ENCODE measurements at regions of chr10 and their contacts with region 1.

Region 1: GRCh38 chr10:100046021-100046486 is 35.6 kb downstream of the CPN1 start:
- DNase-seq: peak; percentile 95
- ATAC-seq: peak; percentile 90

Region 2: DNA sequence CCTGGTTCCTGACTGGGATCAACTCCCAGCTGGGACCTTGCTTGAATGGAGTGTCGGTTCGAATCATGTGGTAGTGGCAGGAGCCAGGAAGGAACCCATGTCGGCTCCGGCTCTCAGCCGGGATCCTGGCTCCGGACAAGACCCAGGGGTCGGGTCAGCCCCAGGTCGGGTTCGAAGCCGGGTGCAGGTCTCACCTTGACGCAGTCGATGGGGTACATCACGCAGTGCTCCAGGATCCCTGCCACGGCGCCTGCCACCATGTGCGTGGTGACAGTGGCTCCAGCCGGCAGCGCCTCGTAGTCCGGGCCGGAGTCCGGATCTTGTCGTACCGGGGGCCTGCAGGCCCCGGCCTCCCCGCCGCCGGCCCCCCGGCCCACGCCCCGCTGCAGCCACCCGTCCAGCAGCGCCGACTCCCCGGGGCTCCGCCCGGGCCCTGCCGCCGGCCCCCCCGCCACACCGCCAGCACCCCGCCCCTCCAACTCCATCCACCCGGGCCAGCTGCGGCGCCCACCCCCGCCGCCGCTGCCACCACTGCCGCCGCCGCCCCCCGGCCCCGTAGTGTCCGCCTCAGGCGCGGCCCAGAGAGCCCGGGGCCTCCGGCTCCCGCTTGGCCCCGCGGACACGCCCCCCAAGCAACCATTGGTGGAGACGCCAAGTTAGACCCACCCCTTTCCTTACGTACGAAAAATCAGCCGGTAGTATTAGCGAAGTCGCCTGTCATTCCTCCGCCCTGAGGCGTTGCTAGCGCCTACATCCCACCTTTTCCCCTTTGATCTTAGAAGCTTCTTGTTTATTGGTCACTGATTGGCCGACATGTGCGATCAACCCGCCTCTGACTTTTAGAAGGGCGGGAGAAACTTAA is 426.0 kb before region 1 on chr10 and contains the start of gene SLC25A28:
- intact Hi-C with region 1: loop called (anchors 5 kb)
- DNase-seq: peak; percentile 96
- ATAC-seq: peak; percentile 93
- total RNA-seq, gene SLC25A28: 53.9 TPM

Region 3: GRCh38 chr10:99845837-99846382 is 200.1 kb before region 1 on chr10:
- intact Hi-C with region 1: loop called (anchors 5 kb)
- DNase-seq: peak; percentile 87
- ATAC-seq: peak; percentile 94

Measured in sciatic nerve (tissue), 2 donors.